AG04449 (cell line): ENCODE measurements at regions of chr1 and their contacts with region 1.

Region 1: DNA sequence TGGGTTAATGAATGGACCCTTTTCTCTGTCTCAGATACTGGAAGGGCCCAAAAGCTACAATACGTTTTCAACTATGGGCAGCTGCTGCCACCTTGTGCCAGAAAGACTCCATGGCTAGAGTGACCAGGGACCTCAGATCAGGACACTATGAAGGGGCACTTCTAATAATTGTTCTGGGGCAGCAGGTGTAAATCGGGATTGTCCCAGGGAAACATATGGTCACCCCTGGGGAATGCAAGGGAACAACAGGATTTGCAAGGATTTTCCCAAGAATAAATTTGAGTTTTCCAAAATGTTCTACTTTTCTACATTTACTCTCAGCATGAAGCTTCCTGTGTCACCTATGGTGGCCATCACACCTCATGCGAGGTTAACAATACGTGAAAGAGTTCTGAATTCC is 12.0 kb upstream of the FCAMR start:
- DNase-seq: no peak
- H3K4me3 ChIP-seq: no peak overlapping the region
- CTCF ChIP-seq: peak; percentile 65

Region 2: GRCh38 chr1:206479183-206480125 is 502.8 kb before region 1 on chr1:
- CTCF ChIA-PET with region 1: interaction called, 23 read pairs
- POLR2A ChIA-PET with region 1: no interaction called
- DNase-seq: no peak
- H3K4me3 ChIP-seq: no peak overlapping the region
- CTCF ChIP-seq: peak; percentile 70

Region 3: DNA sequence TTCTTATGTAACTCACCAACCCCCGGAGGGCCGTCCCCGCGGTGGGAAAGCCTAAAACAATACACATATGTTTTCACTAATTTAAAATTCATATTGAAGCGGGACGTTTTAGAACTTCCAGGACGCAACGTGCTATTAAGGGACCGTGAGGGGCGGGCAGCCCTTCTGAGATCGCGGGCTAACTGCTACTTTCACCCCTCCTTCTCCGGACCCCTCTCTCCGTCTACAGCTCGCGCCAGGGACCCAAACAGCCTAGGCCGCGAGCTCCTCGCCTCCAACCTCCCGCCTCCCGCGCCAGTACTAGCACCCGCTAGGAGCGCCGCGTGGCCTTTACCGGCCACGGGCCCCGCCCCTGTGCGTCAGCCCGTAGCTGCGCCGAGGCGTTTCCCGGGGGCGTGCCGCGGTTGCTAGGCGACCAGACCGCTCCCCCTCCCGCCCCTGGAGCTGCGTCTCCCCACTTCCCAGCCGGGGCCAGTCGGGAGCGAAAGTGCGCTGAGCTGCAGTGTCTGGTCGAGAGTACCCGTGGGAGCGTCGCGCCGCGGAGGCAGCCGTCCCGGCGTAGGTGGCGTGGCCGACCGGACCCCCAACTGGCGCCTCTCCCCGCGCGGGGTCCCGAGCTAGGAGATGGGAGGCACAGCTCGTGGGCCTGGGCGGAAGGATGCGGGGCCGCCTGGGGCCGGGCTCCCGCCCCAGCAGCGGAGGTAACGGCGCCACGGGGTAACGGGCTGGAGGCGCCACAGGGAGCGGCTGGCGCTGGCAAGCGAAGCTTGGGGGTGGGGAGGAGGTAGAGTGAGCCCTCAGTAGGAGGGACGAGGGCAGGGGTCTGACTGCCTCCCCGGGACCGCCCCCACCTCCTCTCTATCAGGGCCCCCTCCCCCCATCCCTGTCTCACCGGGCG is 346.9 kb before region 1 on chr1 and contains the start of gene DYRK3:
- CTCF ChIA-PET with region 1: interaction called, 42 read pairs
- POLR2A ChIA-PET with region 1: no interaction called
- DNase-seq: no peak
- H3K4me3 ChIP-seq: peak within 1 kb of the TSS; percentile 86
- CTCF ChIP-seq: no peak

Region 4: GRCh38 chr1:206706298-206706791 is 275.9 kb before region 1 on chr1:
- CTCF ChIA-PET with region 1: no interaction called
- POLR2A ChIA-PET with region 1: no interaction called
- DNase-seq: peak; percentile 75
- H3K4me3 ChIP-seq: peak overlapping the region; percentile 2
- CTCF ChIP-seq: no peak

Region 5: GRCh38 chr1:206734499-206735142 is 247.6 kb before region 1 on chr1:
- CTCF ChIA-PET with region 1: interaction called, 37 read pairs
- POLR2A ChIA-PET with region 1: no interaction called
- DNase-seq: no peak
- H3K4me3 ChIP-seq: no peak overlapping the region
- CTCF ChIP-seq: peak; percentile 70

Region 6: DNA sequence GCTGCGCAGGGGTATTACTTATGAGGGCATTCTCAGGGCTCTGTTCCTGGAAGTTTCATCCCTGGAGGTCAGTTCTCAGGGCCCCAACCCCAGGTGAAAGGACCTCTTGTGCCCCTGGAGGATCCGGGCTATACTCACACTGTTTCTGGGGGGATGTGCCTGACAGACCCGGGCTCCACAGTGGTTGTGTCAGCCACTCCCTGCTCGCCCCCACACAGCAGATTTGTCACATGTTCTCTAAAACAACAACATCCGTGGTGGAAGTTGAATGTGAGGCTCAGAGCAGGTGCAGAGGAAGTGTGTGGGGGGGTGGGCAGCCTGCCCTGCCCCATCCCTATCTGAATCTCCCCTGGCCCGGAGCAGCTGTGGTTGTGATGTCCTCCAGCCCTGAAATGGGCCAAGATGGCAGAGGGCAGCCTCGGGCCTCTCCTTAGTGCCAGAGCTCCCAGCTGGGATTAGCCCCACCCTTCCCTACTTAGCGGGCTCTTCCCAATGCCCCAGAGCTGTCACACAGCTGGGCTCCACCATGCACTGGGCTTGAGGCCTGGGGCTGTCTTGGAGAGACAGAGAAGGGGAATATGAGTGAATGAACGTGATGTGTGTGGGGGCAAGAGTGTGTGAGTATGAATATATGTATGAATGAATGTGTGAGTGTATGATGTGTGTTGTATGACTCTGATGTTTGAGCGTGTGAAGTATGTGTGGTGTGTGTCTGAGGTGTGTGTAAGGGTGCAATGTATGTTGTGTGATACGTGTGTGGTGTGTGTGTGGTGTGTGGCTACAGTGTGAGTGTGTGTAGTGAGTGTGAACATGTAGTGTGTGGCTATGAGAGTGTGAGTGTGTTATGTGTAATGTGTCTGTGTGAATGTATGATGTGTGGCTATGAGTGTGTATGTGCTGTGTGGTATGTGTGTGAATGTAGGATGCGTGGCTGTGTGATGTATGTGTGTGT is 58.9 kb before region 1 on chr1:
- CTCF ChIA-PET with region 1: interaction called, 10 read pairs
- POLR2A ChIA-PET with region 1: no interaction called
- DNase-seq: no peak
- H3K4me3 ChIP-seq: no peak overlapping the region
- CTCF ChIP-seq: no peak

Region 7: GRCh38 chr1:206949208-206949607 is 33.0 kb before region 1 on chr1:
- CTCF ChIA-PET with region 1: interaction called, 11 read pairs
- POLR2A ChIA-PET with region 1: no interaction called
- DNase-seq: no peak
- H3K4me3 ChIP-seq: no peak overlapping the region
- CTCF ChIP-seq: no peak

Region 8: DNA sequence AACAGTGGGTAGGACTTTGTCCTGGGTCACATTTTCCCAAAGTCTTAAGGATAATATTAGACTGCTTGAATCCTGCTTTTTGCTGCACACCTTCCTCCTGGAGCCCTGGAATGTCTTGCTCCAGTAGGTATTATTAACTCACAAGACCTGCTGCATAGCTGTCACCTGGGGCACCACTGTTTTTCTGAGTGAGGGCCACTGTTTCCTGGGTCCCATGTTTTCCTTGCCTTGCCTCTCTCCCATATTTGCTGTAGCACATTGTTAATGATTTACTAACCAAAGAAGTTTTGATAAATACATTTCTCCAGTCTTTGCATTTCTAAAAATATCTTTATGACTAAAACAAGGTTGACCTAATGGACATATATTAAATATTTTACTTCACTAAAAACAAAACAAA is 10.6 kb after region 1 on chr1:
- CTCF ChIA-PET with region 1: interaction called, 21 read pairs
- POLR2A ChIA-PET with region 1: no interaction called
- DNase-seq: no peak
- H3K4me3 ChIP-seq: no peak overlapping the region
- CTCF ChIP-seq: no peak